ENCODE measurements at regions of chr10 and their contacts with region 1.

Region 1: DNA sequence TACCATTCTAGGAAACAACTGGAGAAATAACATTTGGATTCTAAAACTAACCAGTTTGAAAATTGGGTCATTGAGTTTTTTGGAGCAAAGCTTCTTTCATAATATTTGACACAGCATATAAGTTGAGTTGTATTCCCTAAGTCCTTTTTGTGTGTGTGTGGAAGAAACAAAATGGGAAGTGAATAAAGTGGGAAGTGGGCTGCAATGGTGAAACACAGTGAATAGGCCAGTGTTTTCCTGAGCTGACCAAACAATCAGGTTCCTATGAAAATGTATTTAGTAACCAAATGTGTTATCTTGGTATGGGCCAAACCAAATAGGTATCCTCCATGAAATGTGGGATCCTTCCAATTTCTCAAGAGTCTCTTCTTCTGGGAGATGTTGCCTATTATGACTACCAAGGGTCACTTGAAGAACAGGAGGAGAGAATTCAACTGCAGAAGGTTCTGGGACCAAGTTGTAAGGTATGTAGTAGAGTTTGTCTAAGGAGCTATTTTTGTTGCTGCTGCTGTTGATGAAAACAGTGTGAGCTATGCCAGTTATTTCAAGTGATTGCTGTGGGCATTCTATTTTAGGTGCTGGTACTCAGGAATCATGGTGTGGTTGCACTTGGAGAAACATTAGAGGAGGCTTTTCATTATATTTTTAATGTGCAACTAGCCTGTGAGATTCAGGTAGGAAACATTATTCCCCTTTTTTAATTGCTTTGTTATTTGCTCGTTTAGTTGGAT is 88.3 kb upstream of the MXI1 start:
- DNase-seq: no peak
- ATAC-seq: peak; percentile 83

Region 2: DNA sequence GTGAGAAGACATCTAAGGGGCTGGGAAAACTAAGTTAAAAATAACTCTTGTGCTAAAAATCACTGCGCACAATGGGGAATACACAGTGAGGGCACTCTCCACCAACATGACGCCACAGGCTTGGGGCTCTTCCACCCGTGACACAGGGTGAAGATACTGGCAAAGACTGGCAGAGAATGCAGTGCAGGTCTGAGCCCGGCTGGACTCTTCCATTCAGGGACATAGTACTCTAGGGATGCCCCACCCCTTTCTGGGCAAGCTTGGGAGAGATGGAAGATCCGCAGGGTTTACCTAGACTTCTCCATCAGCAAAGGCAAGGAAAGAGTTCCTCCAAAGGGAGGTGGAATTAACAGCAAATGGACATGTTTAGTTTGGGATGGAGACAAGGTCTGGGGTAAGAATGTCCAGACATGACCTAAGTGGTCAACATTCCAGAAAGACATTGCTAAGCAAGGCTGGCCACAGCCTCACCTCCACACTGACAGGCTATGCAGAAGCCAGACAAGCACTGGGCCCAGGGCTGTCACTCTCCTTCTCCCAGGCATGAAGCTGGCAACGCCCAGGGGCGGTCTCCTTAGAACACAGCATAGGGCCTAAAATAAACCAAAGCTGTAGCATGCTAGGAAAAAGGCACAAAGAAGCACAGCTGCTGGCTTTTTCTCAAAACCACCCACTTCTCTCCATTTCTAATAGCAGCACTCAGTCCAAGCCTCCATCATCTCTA is 223.8 kb before region 1 on chr10:
- intact Hi-C with region 1: loop called (anchors 5 kb)
- DNase-seq: peak; percentile 87
- ATAC-seq: peak; percentile 64

Region 3: DNA sequence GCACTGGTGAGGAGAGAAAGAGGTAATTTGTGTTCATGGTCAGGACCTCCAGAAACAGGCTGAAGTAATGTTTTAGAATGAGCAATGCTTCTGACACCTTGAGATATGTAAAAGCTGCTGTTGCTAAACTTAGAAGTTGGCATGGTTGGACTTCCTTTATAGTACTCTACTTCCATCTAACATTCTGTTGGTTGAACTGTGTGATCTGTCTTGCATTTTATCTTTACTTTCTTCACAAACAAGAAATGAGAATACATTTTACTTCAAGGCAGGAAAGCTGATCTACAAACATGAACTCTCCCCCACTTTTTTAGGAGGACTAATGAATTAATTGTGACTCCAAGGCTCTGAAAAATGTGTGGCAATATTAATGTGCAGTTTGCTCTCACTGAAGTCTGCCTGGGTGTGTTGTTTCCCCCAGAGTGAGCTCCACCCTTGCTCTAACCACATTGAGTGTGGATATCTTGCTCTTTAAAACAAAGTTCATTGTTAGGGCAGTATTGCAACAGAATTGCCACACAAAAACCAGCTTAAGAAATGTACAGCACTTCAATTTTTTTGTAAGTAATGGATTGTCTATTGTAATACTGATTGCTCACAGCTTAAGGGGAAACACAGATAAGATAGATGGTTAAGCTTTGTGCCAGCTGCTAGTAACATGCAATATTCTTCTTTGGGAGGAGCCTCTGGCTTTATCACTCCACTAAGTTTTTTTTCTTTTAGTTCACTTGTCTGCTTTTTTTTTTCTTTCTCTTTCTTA is 42.3 kb before region 1 on chr10:
- intact Hi-C with region 1: loop called (anchors 5 kb)
- DNase-seq: no peak
- ATAC-seq: peak; percentile 91

Region 4: DNA sequence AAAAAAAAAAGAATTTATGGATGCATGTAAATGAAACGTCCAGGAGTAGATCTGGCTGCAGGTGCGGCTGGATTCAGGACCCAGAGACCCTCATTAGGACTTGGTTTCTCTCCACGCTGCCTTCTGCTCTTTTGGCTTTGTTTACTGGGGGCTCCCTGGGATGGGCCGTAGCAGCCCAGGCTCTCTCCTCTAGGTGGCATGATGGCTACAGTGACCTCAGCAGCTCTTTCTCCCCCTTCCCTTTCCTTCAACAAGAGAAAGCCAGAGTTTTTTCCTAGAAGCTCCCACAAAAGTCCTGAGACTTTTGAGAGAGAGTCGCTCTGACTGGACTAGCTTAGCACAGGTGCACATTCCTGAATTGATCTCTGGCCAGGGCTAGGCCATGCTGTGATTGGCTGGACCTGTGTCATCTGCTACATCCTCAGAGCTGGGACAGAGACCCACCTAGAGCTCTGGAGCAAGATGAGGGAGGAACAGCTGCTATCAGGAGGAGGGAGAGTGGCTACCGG is 684.8 kb after region 1 on chr10:
- intact Hi-C with region 1: no loop called
- DNase-seq: no peak
- ATAC-seq: peak; percentile 70

Measured in Right ventricle myocardium inferior (tissue), 1 donor.